MCF 10A (cell line): ENCODE measurements at regions of chr3 and their contacts with region 1.

Region 1: GRCh38 chr3:48663415-48664312 is 978 bp upstream of the CELSR3 start:
- DNase-seq: peak; percentile 99
- H3K4me3 Mint-ChIP-seq: peak overlapping the region; percentile 96
- H3K27ac Mint-ChIP-seq: peak overlapping the region; percentile 99
- H3K4me1 Mint-ChIP-seq: peaks cover 6% of the 10 kb centered on the region
- H3K27me3 Mint-ChIP-seq: no peaks in the 10 kb centered on the region
- CTCF ChIP-seq: peak; percentile 80

Region 2: GRCh38 chr3:48306860-48307530 is 356.7 kb before region 1 on chr3:
- CTCF ChIA-PET with region 1: no interaction called
- POLR2A ChIA-PET with region 1: no interaction called
- intact Hi-C with region 1: no loop called
- DNase-seq: no peak
- H3K4me3 Mint-ChIP-seq: no peak overlapping the region
- H3K27ac Mint-ChIP-seq: no peak overlapping the region
- H3K4me1 Mint-ChIP-seq: peaks cover 7% of the 10 kb centered on the region
- H3K27me3 Mint-ChIP-seq: peaks cover 27% of the 10 kb centered on the region
- CTCF ChIP-seq: no peak

Region 3: GRCh38 chr3:48556793-48557626 is 106.7 kb before region 1 on chr3 and contains the start of gene PFKFB4:
- CTCF ChIA-PET with region 1: no interaction called
- POLR2A ChIA-PET with region 1: interaction called, 17 read pairs
- intact Hi-C with region 1: no loop called
- DNase-seq: peak; percentile 99
- H3K4me3 Mint-ChIP-seq: peak within 1 kb of the TSS; percentile 74
- H3K27ac Mint-ChIP-seq: peak within 1 kb of the TSS; percentile 47
- H3K4me1 Mint-ChIP-seq: peaks cover 11% of the 10 kb centered on the region
- H3K27me3 Mint-ChIP-seq: no peaks in the 10 kb centered on the region
- CTCF ChIP-seq: no peak
- total RNA-seq, gene PFKFB4: 3.4 and 4.6 TPM in 2 replicates

Region 4: GRCh38 chr3:48609088-48610005 is 54.3 kb before region 1 on chr3 and contains the start of gene UQCRC1:
- CTCF ChIA-PET with region 1: no interaction called
- POLR2A ChIA-PET with region 1: interaction called, 7 read pairs
- intact Hi-C with region 1: loop called (anchors 1 kb)
- DNase-seq: peak; percentile 91
- H3K4me3 Mint-ChIP-seq: peak within 1 kb of the TSS; percentile 94
- H3K27ac Mint-ChIP-seq: peak within 1 kb of the TSS; percentile 94
- H3K4me1 Mint-ChIP-seq: peaks cover 18% of the 10 kb centered on the region
- H3K27me3 Mint-ChIP-seq: no peaks in the 10 kb centered on the region
- CTCF ChIP-seq: peak; percentile 47
- total RNA-seq, gene UQCRC1: 383 and 413 TPM in 2 replicates

Region 5: GRCh38 chr3:48652923-48653715 is 10.5 kb before region 1 on chr3:
- CTCF ChIA-PET with region 1: interaction called, 3 read pairs
- POLR2A ChIA-PET with region 1: interaction called, 17 read pairs
- intact Hi-C with region 1: no loop called
- DNase-seq: no peak
- H3K4me3 Mint-ChIP-seq: no peak overlapping the region
- H3K27ac Mint-ChIP-seq: no peak overlapping the region
- H3K4me1 Mint-ChIP-seq: peaks cover 5% of the 10 kb centered on the region
- H3K27me3 Mint-ChIP-seq: no peaks in the 10 kb centered on the region
- CTCF ChIP-seq: no peak

Region 6: GRCh38 chr3:48685602-48686511 is 22.2 kb after region 1 on chr3 and contains the start of gene NCKIPSD:
- CTCF ChIA-PET with region 1: interaction called, 6 read pairs
- POLR2A ChIA-PET with region 1: interaction called, 32 read pairs
- intact Hi-C with region 1: loop called (anchors 1 kb)
- DNase-seq: peak; percentile 85
- H3K4me3 Mint-ChIP-seq: peak within 1 kb of the TSS; percentile 73
- H3K27ac Mint-ChIP-seq: peak within 1 kb of the TSS; percentile 85
- H3K4me1 Mint-ChIP-seq: peaks cover 31% of the 10 kb centered on the region
- H3K27me3 Mint-ChIP-seq: no peaks in the 10 kb centered on the region
- CTCF ChIP-seq: peak; percentile 63
- total RNA-seq, gene NCKIPSD: 23.8 and 26.9 TPM in 2 replicates

Region 7: DNA sequence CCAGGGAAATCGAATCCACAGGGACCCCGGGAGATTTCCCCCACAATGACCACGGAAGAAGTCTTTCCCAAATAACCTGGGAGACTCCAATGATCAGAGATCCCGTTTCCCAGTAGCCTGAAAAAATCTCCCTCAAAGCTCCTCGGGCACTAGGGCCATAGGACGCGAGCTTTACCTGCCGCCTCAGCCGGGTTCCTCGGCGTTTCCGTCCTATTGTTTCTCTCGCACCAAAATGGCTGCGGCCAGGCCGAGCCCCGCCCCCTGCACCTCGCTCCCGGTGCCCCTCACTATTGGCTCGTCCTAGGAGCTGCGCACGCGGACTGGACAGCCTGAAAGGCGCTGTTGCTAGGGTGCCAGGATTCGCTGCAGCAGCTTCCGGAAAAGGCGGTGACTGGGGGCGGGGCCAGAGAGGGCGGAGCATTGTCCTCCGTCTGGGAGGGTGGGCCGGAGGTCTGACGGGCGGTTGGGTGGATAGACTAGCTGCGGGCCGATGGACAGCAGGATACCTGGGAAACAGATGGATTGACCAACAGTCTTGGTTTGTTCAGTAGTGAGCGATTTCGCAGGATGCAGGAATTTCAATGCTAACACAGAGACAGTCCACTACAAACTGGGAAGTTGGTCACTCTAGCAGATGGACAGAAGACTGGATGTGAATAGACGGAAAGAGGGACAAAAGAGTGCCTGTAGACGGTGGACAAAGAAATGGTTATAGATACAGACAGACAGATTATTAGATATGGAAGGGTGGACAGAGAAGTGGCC is 53.5 kb after region 1 on chr3 and contains the start of gene IP6K2:
- CTCF ChIA-PET with region 1: no interaction called
- POLR2A ChIA-PET with region 1: interaction called, 30 read pairs
- intact Hi-C with region 1: no loop called
- DNase-seq: peak; percentile 98
- H3K4me3 Mint-ChIP-seq: peak within 1 kb of the TSS; percentile 93
- H3K27ac Mint-ChIP-seq: peak within 1 kb of the TSS; percentile 98
- H3K4me1 Mint-ChIP-seq: peaks cover 12% of the 10 kb centered on the region
- H3K27me3 Mint-ChIP-seq: no peaks in the 10 kb centered on the region
- CTCF ChIP-seq: no peak
- total RNA-seq, gene IP6K2: 99.3 and 117 TPM in 2 replicates

Region 8: GRCh38 chr3:48820612-48821324 is 157.1 kb after region 1 on chr3:
- CTCF ChIA-PET with region 1: no interaction called
- POLR2A ChIA-PET with region 1: no interaction called
- intact Hi-C with region 1: no loop called
- DNase-seq: peak; percentile 43
- H3K4me3 Mint-ChIP-seq: no peak overlapping the region
- H3K27ac Mint-ChIP-seq: no peak overlapping the region
- H3K4me1 Mint-ChIP-seq: no peaks in the 10 kb centered on the region
- H3K27me3 Mint-ChIP-seq: no peaks in the 10 kb centered on the region
- CTCF ChIP-seq: no peak

Region 9: DNA sequence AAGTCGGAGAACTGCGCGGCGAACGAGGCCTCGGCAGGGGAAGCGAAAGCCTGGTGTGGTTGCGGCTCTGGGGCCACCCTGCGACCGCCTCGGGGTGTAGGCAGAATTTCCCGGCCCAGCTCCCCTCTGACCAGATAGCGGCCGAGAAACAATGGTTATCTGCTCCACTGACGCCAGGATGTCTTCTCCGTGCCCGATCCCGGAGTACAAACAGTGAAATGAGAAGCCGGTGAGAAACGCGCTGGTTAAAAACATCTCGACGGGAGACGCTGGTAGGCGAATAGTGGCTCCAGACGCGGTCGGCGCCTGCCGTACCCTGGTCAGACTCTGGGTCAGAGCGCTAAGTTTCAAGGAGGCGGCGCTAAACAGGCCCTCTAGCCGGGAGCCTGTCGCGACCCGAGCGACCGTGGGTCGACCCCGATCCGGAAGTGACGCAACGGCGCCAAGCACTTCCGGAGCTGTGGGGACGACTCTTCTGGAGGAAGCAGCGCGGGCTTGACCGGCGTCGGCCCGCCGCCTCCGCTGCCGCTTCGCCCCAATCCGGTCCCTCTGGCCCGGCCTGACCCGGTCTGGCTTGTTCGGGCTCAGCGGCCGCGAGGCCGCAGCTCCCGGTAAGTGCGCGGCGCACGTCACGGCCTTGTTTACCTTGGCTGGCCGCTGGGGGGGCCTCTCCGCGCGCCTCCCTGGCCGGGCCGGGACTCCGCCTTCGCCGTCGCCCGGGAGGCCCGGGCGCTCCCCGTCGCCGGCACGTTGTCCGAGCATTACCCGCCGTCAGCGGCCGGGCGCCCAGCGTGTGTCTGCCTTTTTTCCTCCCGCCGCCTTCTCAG is 254.9 kb after region 1 on chr3 and contains the start of gene ARIH2:
- CTCF ChIA-PET with region 1: no interaction called
- POLR2A ChIA-PET with region 1: interaction called, 14 read pairs
- intact Hi-C with region 1: no loop called
- DNase-seq: peak; percentile 92
- H3K4me3 Mint-ChIP-seq: peak within 1 kb of the TSS; percentile 95
- H3K27ac Mint-ChIP-seq: peak within 1 kb of the TSS; percentile 96
- H3K4me1 Mint-ChIP-seq: no peaks in the 10 kb centered on the region
- H3K27me3 Mint-ChIP-seq: no peaks in the 10 kb centered on the region
- CTCF ChIP-seq: no peak
- total RNA-seq, gene ARIH2: 152 and 167 TPM in 2 replicates